CD8-positive, alpha-beta T cell (primary cell): ENCODE measurements at regions of chr7 and their contacts with region 1.

Region 1: GRCh38 chr7:5237286-5237685 is 45.5 kb upstream of the SLC29A4 start:
- DNase-seq: no peak
- ATAC-seq: no peak
- H3K4me3 ChIP-seq: no peak overlapping the region
- H3K4me3 Mint-ChIP-seq: no peak overlapping the region
- H3K27ac ChIP-seq: no peak overlapping the region
- H3K27ac Mint-ChIP-seq: no peak overlapping the region
- H3K4me1 ChIP-seq: peaks cover 17% of the 10 kb centered on the region
- H3K4me1 Mint-ChIP-seq: peaks cover 31% of the 10 kb centered on the region
- H3K27me3 ChIP-seq: peaks cover 0 to 7% of the 10 kb centered on the region in 2 experiments
- H3K27me3 Mint-ChIP-seq: peaks cover 18% of the 10 kb centered on the region
- CTCF ChIP-seq: no peak

Region 2: GRCh38 chr7:4177001-4177400 is 1060.3 kb before region 1 on chr7:
- CTCF ChIA-PET with region 1: no interaction called
- POLR2A ChIA-PET with region 1: no interaction called
- intact Hi-C with region 1: no loop called
- DNase-seq: no peak
- ATAC-seq: no peak
- H3K4me3 ChIP-seq: no peak overlapping the region
- H3K4me3 Mint-ChIP-seq: no peak overlapping the region
- H3K27ac ChIP-seq: no peak overlapping the region
- H3K27ac Mint-ChIP-seq: no peak overlapping the region
- H3K4me1 ChIP-seq: no peaks in the 10 kb centered on the region
- H3K4me1 Mint-ChIP-seq: no peaks in the 10 kb centered on the region
- H3K27me3 ChIP-seq: no peaks in the 10 kb centered on the region
- H3K27me3 Mint-ChIP-seq: no peaks in the 10 kb centered on the region
- CTCF ChIP-seq: no peak

Region 3: GRCh38 chr7:5218564-5219360 is 18.5 kb before region 1 on chr7:
- CTCF ChIA-PET with region 1: interaction called, 11 read pairs
- POLR2A ChIA-PET with region 1: no interaction called
- intact Hi-C with region 1: no loop called
- DNase-seq: peak in 1 of 9 experiments; percentile 31
- ATAC-seq: no peak
- H3K4me3 ChIP-seq: no peak overlapping the region
- H3K4me3 Mint-ChIP-seq: no peak overlapping the region
- H3K27ac ChIP-seq: no peak overlapping the region
- H3K27ac Mint-ChIP-seq: no peak overlapping the region
- H3K4me1 ChIP-seq: no peaks in the 10 kb centered on the region
- H3K4me1 Mint-ChIP-seq: no peaks in the 10 kb centered on the region
- H3K27me3 ChIP-seq: no peaks in the 10 kb centered on the region
- H3K27me3 Mint-ChIP-seq: no peaks in the 10 kb centered on the region
- CTCF ChIP-seq: no peak

Region 4: DNA sequence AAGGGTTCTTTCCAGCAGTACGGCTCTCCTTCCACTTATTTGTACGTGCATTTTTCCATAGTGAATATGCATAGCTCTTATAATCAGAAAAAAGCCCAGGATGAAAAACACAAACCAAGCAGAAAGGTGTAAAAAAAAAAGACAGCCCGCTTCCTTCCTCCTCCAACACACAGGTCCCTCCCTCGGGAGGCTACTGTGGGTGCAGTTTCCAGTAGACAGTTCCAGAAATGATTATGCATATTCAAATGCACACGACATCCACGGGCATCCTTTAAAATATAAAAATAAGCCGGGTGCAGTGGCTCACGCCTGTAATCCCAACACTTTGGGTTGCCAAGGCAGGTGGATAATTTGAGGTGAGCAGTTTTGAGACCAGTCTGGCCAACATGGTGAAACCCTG is 126.4 kb after region 1 on chr7:
- CTCF ChIA-PET with region 1: interaction called, 5 read pairs
- POLR2A ChIA-PET with region 1: no interaction called
- intact Hi-C with region 1: loop called in 1 of 2 experiments (anchors 1 kb)
- DNase-seq: no peak
- ATAC-seq: no peak
- H3K4me3 ChIP-seq: no peak overlapping the region
- H3K4me3 Mint-ChIP-seq: no peak overlapping the region
- H3K27ac ChIP-seq: no peak overlapping the region
- H3K27ac Mint-ChIP-seq: no peak overlapping the region
- H3K4me1 ChIP-seq: no peaks in the 10 kb centered on the region
- H3K4me1 Mint-ChIP-seq: peaks cover 20% of the 10 kb centered on the region
- H3K27me3 ChIP-seq: no peaks in the 10 kb centered on the region
- H3K27me3 Mint-ChIP-seq: no peaks in the 10 kb centered on the region
- CTCF ChIP-seq: no peak